ENCODE measurements at regions of chrX and their contacts with region 1.

Region 1: GRCh38 chrX:41259516-41259915 is 74.4 kb upstream of the DDX3X start:
- DNase-seq: no peak
- ATAC-seq: no peak
- H3K4me3 ChIP-seq: no peak overlapping the region
- H3K27ac ChIP-seq: no peak overlapping the region
- H3K4me1 ChIP-seq: no peaks in the 10 kb centered on the region
- CTCF ChIP-seq: no peak
- EP300 ChIP-seq: no peak
- POLR2A ChIP-seq: no peak
- RAD21 ChIP-seq: no peak

Region 2: GRCh38 chrX:40647307-40648197 is 612.0 kb before region 1 on chrX and contains the start of gene CXorf38:
- CTCF ChIA-PET with region 1: interaction called, 11 read pairs
- POLR2A ChIA-PET with region 1: no interaction called
- DNase-seq: peak; percentile 69 to 91
- ATAC-seq: peak; percentile 84 to 92
- H3K4me3 ChIP-seq: peak within 1 kb of the TSS; percentile 97
- H3K27ac ChIP-seq: peak within 1 kb of the TSS; percentile 86 to 96
- H3K4me1 ChIP-seq: peaks cover 19% of the 10 kb centered on the region
- CTCF ChIP-seq: no peak
- EP300 ChIP-seq: no peak
- POLR2A ChIP-seq: peak; percentile 65
- RAD21 ChIP-seq: no peak
- polyA plus RNA-seq, gene CXorf38: 12.5 and 14.3 TPM in 2 replicates

Region 3: DNA sequence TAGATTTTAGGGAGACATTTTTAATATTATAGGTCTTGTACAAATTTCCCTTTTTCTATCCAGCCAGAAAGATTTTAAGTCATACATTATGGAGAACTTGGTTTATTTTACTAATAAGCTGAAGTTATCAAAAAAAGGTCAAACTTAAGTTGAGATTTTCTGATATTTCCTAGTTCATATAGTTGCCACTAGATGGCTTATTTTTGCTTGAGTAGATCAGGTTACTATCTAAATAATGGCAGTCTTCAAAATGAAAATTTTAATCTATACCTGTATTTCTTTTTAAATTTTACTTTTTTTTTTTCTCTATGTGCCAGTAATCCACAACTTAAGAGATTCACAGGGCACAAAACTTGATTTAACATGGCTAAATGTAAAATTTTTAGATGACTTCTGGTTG is 121.9 kb before region 1 on chrX:
- CTCF ChIA-PET with region 1: no interaction called
- POLR2A ChIA-PET with region 1: no interaction called
- DNase-seq: no peak
- ATAC-seq: no peak
- H3K4me3 ChIP-seq: no peak overlapping the region
- H3K27ac ChIP-seq: no peak overlapping the region
- H3K4me1 ChIP-seq: peaks cover 10% of the 10 kb centered on the region; the same call in 2 of the 3 replicates
- CTCF ChIP-seq: peak; percentile 38; the same call in 2 of the 3 replicates
- EP300 ChIP-seq: no peak
- POLR2A ChIP-seq: no peak
- RAD21 ChIP-seq: 0 out of 5 replicates have a peak, but pooled peaks have one; percentile 5 to 27

Region 4: DNA sequence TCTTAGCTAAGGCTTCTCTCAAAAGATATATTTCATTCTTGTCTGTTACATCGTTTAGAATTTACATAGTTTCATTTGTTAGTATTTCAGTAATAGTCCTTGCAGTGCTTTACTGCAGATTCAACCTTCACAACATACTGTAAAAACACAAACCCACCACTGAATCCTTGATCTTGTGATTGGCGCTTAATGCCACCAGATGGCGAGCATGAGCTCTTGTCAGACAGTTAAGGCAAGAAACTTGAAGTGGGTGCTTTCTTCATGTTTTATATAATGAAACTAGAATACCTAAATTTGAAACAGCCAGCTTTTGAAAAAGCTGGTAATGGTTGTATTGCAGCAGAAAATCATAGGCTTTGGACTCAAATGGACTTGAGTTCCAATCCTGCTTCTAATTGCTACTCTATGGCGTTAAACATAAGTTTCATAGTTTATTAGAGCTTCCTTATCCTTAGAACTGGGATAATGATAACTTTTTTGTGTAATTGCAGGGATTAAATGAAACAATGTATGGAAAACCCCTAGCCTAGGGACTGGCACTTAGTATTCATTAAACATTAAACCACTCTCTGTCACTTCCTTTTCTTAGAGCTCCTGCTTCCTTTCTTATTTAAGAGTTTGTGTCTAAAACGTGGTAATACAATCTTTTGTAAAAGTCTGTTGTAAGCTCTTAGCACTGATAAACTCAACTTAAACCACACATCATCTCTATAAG is 79.2 kb before region 1 on chrX:
- CTCF ChIA-PET with region 1: interaction called, 36 read pairs
- POLR2A ChIA-PET with region 1: no interaction called
- DNase-seq: peak; percentile 34 to 73
- ATAC-seq: peak; percentile 85 to 89; a peak in 5 of 6 replicates
- H3K4me3 ChIP-seq: no peak overlapping the region
- H3K27ac ChIP-seq: no peak overlapping the region
- H3K4me1 ChIP-seq: peaks cover 8% of the 10 kb centered on the region; the same call in 2 of the 3 replicates
- CTCF ChIP-seq: peak; percentile 58
- EP300 ChIP-seq: no peak
- POLR2A ChIP-seq: no peak
- RAD21 ChIP-seq: peak; percentile 35 to 62; a peak in 3 of 5 replicates

Region 5: DNA sequence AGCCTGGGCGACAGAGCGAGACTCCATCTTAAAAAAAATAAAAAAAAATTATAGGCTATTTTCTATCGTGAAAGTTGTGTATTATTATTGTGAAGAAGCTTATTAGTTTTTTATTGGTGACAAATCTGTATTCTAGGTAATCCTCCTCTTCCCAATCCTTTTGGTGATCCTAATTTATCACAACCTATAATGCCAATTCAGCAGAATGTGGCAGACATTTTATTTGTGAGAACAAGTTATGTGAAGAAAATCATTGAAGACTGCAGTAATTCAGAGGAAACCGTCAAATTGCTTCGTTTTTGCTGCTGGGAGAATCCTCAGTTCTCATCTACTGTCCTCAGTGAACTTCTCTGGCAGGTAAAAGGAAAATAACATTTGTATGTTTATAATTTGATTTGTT is 34.9 kb before region 1 on chrX:
- CTCF ChIA-PET with region 1: interaction called, 12 read pairs
- POLR2A ChIA-PET with region 1: no interaction called
- DNase-seq: no peak
- ATAC-seq: no peak
- H3K4me3 ChIP-seq: no peak overlapping the region
- H3K27ac ChIP-seq: no peak overlapping the region
- H3K4me1 ChIP-seq: no peaks in the 10 kb centered on the region
- CTCF ChIP-seq: no peak
- EP300 ChIP-seq: no peak
- POLR2A ChIP-seq: no peak
- RAD21 ChIP-seq: no peak

Region 6: GRCh38 chrX:41240509-41240908 is 19.0 kb before region 1 on chrX:
- CTCF ChIA-PET with region 1: interaction called, 28 read pairs
- POLR2A ChIA-PET with region 1: no interaction called
- DNase-seq: no peak
- ATAC-seq: no peak
- H3K4me3 ChIP-seq: no peak overlapping the region
- H3K27ac ChIP-seq: no peak overlapping the region
- H3K4me1 ChIP-seq: peaks cover 5% of the 10 kb centered on the region; the same call in 2 of the 3 replicates
- CTCF ChIP-seq: no peak
- EP300 ChIP-seq: no peak
- POLR2A ChIP-seq: no peak
- RAD21 ChIP-seq: no peak

Region 7: DNA sequence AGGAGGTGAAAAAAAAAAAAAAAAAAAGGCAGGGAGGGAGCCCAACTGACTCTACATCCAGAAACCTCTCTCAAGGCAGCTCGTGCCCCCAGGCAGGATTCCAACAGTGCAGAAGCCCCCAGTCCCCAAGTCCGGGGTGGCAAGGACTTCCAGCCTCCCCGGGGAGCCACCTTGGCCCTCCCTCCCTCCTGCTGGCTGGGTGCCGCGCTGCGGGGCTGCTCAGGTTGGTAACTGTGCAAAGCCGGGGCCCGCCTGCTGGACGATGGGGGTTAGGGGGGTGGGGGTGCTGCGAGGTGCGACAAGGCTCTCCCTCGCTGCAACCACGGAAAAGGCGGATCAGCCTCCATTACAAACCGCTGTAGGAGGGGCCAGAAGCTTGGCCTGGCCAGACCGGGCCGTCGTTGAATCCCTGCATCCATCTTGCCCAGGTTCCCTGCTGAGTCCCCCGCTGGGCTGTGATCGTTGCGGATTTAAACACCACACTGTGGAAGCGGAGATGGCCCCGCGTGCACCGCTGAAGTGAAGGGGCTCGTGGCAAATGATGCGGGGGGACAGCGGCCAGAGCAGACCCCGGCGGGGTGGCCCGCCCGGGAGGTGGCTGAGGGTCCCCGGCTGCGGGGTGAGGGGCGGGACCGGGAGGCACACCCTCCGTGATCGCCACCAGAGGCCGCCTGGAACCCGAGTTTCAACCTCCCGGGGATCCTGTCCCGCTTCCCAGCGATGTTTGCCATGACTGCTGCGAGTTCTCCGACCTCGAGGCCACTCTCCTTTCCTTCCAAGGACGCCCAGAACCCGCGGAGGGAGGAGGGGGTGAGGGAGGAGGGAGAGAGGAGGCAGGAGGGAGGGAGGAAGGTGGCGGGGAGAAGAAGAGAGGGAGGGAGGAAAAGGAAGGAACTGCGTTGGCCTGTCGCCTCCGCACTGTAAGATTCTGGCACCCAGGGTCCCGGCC is 16.4 kb after region 1 on chrX:
- CTCF ChIA-PET with region 1: interaction called, 10 read pairs
- POLR2A ChIA-PET with region 1: no interaction called
- DNase-seq: peak; percentile 81 to 84
- ATAC-seq: peak; percentile 96 to 97
- H3K4me3 ChIP-seq: peak overlapping the region; percentile 54
- H3K27ac ChIP-seq: peak overlapping the region; percentile 93 to 98
- H3K4me1 ChIP-seq: peaks cover 7% of the 10 kb centered on the region
- CTCF ChIP-seq: peak; percentile 60
- EP300 ChIP-seq: no peak
- POLR2A ChIP-seq: peak; percentile 45
- RAD21 ChIP-seq: peak; percentile 72 to 87

Measured in A549 (cell line).